Psoas muscle (tissue), 8 donors: ENCODE measurements at regions of chr11 and their contacts with region 1.

Region 1: GRCh38 chr11:128607819-128608218 is 20.5 kb upstream of the ETS1 start:
- DNase-seq: no peak
- ATAC-seq: no peak
- H3K4me3 ChIP-seq: no peak overlapping the region
- H3K27ac ChIP-seq: no peak overlapping the region
- H3K4me1 ChIP-seq: peaks cover 12% of the 10 kb centered on the region
- H3K27me3 ChIP-seq: peaks cover 0 to 2% (median 0%) of the 10 kb centered on the region in 3 donors
- CTCF ChIP-seq: no peak

Region 2: GRCh38 chr11:128530118-128531074 is 77.4 kb before region 1 on chr11:
- intact Hi-C with region 1: loop called in 1 of 2 experiments (anchors 5 kb)
- DNase-seq: peak; percentile 61
- ATAC-seq: peak; percentile 43 to 80 (median 75)
- H3K4me3 ChIP-seq: no peak overlapping the region
- H3K27ac ChIP-seq: no peak overlapping the region
- H3K4me1 ChIP-seq: no peaks in the 10 kb centered on the region
- H3K27me3 ChIP-seq: no peaks in the 10 kb centered on the region
- CTCF ChIP-seq: no peak

Region 3: DNA sequence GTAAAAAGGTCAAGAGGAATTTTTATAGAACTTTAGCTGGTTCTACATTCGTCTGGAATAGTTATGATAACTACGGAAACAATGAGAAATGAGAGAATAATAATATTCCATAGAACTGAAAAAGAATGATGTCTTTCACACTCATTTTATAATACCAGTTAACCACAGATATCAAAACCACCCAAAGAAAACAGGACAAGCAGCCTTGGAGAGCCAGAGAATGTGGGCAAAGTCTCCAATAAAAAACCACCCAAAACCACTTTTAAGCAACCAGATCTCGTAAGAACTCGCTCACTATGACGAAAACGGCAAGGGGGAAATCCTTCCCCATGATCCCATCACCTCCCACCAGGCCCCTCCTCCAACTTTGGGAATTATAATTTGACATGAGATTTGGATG is 523.5 kb after region 1 on chr11:
- intact Hi-C with region 1: no loop called
- DNase-seq: no peak
- ATAC-seq: no peak
- H3K4me3 ChIP-seq: no peak overlapping the region
- H3K27ac ChIP-seq: no peak overlapping the region
- H3K4me1 ChIP-seq: no peaks in the 10 kb centered on the region
- H3K27me3 ChIP-seq: no peaks in the 10 kb centered on the region
- CTCF ChIP-seq: no peak